Naive thymus-derived CD4-positive, alpha-beta T cell (primary cell): ENCODE measurements at regions of chr11 and their contacts with region 1.

Region 1: DNA sequence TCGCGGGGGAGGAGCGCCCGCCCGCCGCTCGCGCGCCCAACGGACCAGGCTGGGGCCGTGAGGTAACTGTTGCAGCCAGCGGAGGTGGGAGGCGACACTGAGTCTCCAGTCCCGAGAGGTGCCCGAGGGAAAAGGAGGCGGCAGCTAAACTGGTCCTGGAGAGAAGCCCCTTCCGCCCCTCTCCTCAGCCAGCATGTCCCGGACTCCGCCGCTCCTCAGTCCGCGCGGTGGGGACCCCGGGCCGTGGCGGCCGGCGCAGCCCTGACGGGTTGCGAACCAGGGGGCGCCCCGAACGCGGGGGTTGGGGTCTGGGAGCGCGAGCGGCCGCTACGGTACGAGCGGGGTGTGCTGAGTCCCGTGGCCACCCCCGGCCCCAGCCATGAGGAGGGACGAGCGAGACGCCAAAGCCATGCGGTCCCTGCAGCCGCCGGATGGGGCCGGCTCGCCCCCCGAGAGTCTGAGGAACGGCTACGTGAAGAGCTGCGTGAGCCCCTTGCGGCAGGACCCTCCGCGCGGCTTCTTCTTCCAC is at the start of gene PDE3B:
- DNase-seq: peak; percentile 45 to 79 (median 61)
- ATAC-seq: peak; percentile 78
- H3K4me3 ChIP-seq: peak within 1 kb of the TSS; percentile 68
- H3K4me3 Mint-ChIP-seq: peak within 1 kb of the TSS; percentile 90 to 99 (median 94)
- H3K27ac ChIP-seq: peak within 1 kb of the TSS; percentile 89
- H3K27ac Mint-ChIP-seq: peak within 1 kb of the TSS; percentile 69 to 95 (median 92)
- H3K4me1 ChIP-seq: peaks cover 26 to 33% of the 10 kb centered on the region in 2 donors
- H3K4me1 Mint-ChIP-seq: peaks cover 22 to 65% (median 49%) of the 10 kb centered on the region in 7 donors
- H3K27me3 ChIP-seq: no peaks in the 10 kb centered on the region
- H3K27me3 Mint-ChIP-seq: no peaks in the 10 kb centered on the region
- total RNA-seq, gene PDE3B: 79.6 to 268 (median 151) TPM

Region 2: GRCh38 chr11:14519917-14520746 is 123.6 kb before region 1 on chr11 and contains the start of gene PSMA1:
- CTCF ChIA-PET with region 1: no interaction called
- POLR2A ChIA-PET with region 1: interaction called, 9 read pairs
- intact Hi-C with region 1: loop called (anchors 1 kb)
- DNase-seq: peak; percentile 72 to 95 (median 89)
- ATAC-seq: peak; percentile 96
- H3K4me3 ChIP-seq: peak within 1 kb of the TSS; percentile 70
- H3K4me3 Mint-ChIP-seq: peak within 1 kb of the TSS; percentile 86 to 99 (median 97)
- H3K27ac ChIP-seq: peak within 1 kb of the TSS; percentile 96
- H3K27ac Mint-ChIP-seq: peak within 1 kb of the TSS; percentile 93 to 99 (median 96)
- H3K4me1 ChIP-seq: peaks cover 14 to 16% of the 10 kb centered on the region in 2 donors
- H3K4me1 Mint-ChIP-seq: peaks cover 15 to 43% (median 38%) of the 10 kb centered on the region in 7 donors
- H3K27me3 ChIP-seq: no peaks in the 10 kb centered on the region
- H3K27me3 Mint-ChIP-seq: no peaks in the 10 kb centered on the region
- total RNA-seq, gene PSMA1: 103 to 253 (median 120) TPM

Region 3: GRCh38 chr11:14554959-14555358 is 88.8 kb before region 1 on chr11:
- CTCF ChIA-PET with region 1: interaction called, 5 read pairs
- POLR2A ChIA-PET with region 1: interaction called, 18 read pairs
- intact Hi-C with region 1: loop called in 1 of 2 experiments (anchors 1 kb)
- DNase-seq: peak in 7 of 9 donors; percentile 76 to 92 (median 87)
- ATAC-seq: peak; percentile 95
- H3K4me3 ChIP-seq: no peak overlapping the region
- H3K4me3 Mint-ChIP-seq: peak overlapping the region in 9 of 10 donors; percentile 42 to 85 (median 65)
- H3K27ac ChIP-seq: peak overlapping the region; percentile 73
- H3K27ac Mint-ChIP-seq: peak overlapping the region; percentile 82 to 99 (median 95)
- H3K4me1 ChIP-seq: peaks cover 19 to 23% of the 10 kb centered on the region in 2 donors
- H3K4me1 Mint-ChIP-seq: peaks cover 23 to 72% (median 60%) of the 10 kb centered on the region in 7 donors
- H3K27me3 ChIP-seq: no peaks in the 10 kb centered on the region
- H3K27me3 Mint-ChIP-seq: no peaks in the 10 kb centered on the region

Region 4: DNA sequence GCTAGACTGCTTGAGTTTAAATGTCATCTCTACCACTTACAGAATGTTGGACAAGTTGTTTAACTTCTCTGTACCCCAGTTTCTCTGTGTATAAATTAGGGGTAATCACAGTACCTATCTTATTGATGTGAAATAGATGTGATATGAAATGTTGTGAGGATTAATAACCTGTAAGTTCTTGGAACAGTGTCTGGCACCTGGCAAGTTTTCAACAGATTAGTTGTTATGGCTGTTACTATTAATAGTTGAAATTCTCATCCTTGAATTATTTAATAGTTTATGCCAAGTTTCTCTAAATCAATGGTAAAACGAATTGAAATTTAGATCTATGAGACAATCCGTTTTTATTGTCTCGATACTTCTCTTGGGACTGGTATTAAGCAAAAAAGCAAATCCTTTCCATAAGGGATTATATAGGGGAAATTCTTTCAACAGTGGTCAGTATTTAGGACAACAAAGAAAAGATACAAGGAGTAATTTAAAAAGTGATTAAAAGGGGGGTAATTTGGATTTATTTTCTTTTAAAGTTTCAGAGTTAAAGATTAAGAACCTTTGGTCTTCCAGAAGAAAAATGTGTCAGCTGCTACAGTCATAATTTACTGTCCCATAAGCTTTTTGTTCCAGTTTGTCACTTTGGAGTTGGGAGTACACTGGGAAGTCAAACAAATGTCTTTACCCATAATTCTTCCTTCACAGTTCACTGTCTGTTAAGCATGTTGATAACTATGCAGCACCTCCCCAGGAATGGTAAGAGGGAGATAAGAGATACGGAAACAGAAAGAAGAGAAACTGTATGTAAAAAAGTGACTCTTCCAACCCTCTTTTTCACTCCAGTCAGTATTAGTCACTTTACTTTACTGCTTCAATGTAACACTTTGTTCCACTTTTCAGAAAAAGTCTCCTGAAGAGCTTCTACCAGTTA is 13.0 kb after region 1 on chr11:
- CTCF ChIA-PET with region 1: interaction called, 5 read pairs
- POLR2A ChIA-PET with region 1: interaction called, 10 read pairs
- intact Hi-C with region 1: loop called in 1 of 2 experiments (anchors 1 kb)
- DNase-seq: no peak
- ATAC-seq: no peak
- H3K4me3 ChIP-seq: no peak overlapping the region
- H3K4me3 Mint-ChIP-seq: peak overlapping the region in 1 of 10 donors; percentile 1
- H3K27ac ChIP-seq: no peak overlapping the region
- H3K27ac Mint-ChIP-seq: peak overlapping the region in 5 of 9 donors; percentile 1 to 39 (median 8)
- H3K4me1 ChIP-seq: peaks cover 0 to 22% of the 10 kb centered on the region in 2 donors
- H3K4me1 Mint-ChIP-seq: peaks cover 32 to 84% (median 71%) of the 10 kb centered on the region in 7 donors
- H3K27me3 ChIP-seq: no peaks in the 10 kb centered on the region
- H3K27me3 Mint-ChIP-seq: no peaks in the 10 kb centered on the region